Aorta (tissue), 5 donors: ENCODE measurements at regions of chr3 and their contacts with region 1.

Region 1: DNA sequence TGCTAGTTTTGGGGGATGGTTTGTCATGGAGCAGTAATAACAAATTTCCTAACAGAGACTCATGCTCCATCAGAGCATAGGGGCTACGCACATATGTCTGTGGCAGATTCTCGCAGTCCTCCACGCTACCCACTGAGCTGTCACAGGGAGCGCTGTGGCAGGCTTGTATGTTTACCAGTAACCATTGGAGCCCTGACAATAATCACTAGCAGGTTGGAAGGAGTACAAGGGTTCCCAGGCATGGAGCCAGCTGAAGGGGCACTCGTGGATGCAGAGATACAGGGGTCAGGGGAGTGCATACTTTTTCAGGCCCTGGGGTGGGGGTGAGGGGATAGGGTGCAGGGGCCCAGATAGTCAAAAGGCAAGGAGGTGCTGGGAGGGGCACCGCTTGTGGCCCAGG is 7.9 kb upstream of the GP9 start:
- DNase-seq: peak in 1 of 2 donors; percentile 75
- ATAC-seq: peak; percentile 66
- H3K4me3 ChIP-seq: no peak overlapping the region
- H3K27ac ChIP-seq: peak overlapping the region; percentile 58 to 62
- H3K4me1 ChIP-seq: no peaks in the 10 kb centered on the region
- H3K27me3 ChIP-seq: no peaks in the 10 kb centered on the region

Region 2: DNA sequence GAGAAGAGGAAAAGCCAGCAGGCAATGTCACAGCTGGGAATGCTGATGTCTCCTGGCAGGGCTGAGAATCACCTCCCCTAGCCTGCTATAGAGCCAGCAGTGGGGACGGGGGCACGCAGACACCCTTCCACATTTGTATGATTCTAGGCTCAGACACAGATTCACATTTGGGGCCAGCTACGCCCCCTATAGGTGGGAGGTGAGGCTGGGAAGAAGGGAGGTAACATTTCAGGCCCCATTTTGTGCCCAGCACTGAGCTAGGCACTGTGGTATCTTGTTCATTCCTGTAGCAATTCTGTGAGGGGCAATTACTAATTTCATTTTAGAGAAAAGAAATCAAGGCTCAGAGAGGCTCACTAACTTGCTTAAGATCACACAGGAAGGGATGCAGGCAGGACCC is 189.1 kb before region 1 on chr3:
- intact Hi-C with region 1: no loop called
- DNase-seq: no peak
- ATAC-seq: no peak
- H3K4me3 ChIP-seq: no peak overlapping the region
- H3K27ac ChIP-seq: no peak overlapping the region
- H3K4me1 ChIP-seq: no peaks in the 10 kb centered on the region
- H3K27me3 ChIP-seq: no peaks in the 10 kb centered on the region

Region 3: GRCh38 chr3:129087138-129087702 is 34.5 kb after region 1 on chr3:
- intact Hi-C with region 1: loop called (anchors 2 to 5 kb)
- DNase-seq: peak; percentile 79 to 86
- ATAC-seq: peak; percentile 83
- H3K4me3 ChIP-seq: no peak overlapping the region
- H3K27ac ChIP-seq: peak overlapping the region; percentile 15 to 99
- H3K4me1 ChIP-seq: peaks cover 0 to 3% of the 10 kb centered on the region in 2 donors
- H3K27me3 ChIP-seq: no peaks in the 10 kb centered on the region

Region 4: DNA sequence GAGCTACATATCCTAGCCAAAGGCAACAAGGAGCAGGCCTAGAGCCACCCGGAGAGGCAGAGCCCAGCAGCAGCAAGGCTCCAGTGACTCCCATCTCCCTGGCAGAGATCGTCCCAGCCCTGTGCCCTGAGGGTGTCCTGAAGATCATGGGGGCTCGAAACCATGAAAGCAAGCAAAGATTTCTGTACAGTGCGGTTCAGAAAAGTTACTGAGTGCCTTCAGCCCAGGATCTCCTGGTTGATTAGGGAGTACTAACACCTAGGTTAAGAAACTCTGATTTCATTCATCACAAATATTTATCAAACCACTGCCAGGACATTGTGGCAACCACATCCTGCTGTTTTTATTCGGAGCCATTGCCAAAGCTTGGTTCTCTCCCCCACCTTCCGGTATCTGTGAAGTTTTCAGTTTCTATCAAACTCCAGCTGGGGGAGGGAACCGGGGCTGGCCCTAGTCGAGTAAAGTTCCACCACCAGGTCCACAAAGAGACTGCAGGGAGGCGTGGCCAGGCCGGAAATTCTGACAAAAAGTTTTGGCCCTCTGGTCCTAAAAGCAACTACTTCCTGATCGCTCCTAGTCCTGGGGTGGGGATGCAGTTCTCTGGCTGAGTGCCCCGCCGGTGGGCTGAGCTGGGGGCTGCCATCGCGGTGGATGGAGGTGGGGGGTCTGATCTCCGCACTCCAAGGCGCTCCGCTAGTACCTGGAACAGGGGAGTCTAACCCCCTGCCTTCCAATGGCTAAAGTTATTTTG is 67.8 kb after region 1 on chr3:
- intact Hi-C with region 1: loop called in 1 of 2 experiments (anchors 5 kb)
- DNase-seq: peak; percentile 94 to 95
- ATAC-seq: peak; percentile 82
- H3K4me3 ChIP-seq: peak overlapping the region; percentile 75 to 78
- H3K27ac ChIP-seq: peak overlapping the region; percentile 61 to 76
- H3K4me1 ChIP-seq: no peaks in the 10 kb centered on the region
- H3K27me3 ChIP-seq: no peaks in the 10 kb centered on the region